ENCODE measurements at regions of chr17 and their contacts with region 1.

Region 1: GRCh38 chr17:4110152-4110551 is 32.7 kb downstream of the ZZEF1 start:
- DNase-seq: peak; percentile 38
- H3K4me3 ChIP-seq: no peak overlapping the region
- H3K27ac ChIP-seq: no peak overlapping the region
- H3K4me1 ChIP-seq: peaks cover 5% of the 10 kb centered on the region
- H3K27me3 ChIP-seq: no peaks in the 10 kb centered on the region
- CTCF ChIP-seq: no peak

Region 2: DNA sequence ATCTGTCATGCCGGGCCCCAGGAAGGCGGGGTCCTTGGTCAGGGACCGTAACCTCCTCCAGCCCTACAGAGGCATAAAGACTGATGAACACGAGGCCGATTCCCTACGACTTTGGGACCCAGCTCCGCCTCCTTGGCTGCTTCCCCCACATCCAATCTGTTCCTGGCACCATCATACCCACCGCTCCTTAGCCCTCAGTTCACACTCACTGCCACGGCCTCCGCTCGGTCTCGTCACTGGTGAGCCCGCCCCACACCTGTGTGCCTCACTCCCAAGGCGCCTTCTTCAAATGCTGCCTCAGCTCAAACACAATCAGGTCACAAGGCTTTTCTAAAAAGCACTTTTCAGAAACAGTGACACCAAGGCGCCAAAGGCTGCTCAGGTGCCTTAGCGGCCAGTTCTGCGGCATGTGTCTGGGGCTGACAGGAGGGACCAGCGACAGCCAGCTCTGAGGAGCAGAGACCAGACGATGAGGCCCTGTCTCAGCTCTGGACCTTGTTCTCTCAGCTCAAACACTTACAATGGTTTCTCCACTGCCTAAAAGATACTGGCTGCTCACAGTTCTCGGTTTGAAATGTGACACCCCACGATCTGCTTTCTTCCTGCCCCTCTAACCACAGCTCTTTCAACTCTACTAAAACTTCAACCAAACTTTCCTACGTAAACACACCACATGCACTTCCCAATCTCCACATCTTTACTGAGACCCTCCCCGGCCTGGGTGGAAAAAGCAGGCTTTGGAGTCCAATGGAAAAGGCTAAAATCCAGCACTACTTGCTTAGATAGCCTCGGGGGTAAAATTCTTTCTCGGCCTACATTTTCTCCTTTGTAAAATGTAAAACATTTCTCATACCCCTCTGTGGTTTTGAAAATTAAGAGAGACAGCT is 66.0 kb after region 1 on chr17:
- CTCF ChIA-PET with region 1: no interaction called
- dilution Hi-C with region 1: no loop called
- in situ Hi-C with region 1: no loop called
- intact Hi-C with region 1: no loop called
- DNase-seq: no peak
- H3K4me3 ChIP-seq: no peak overlapping the region
- H3K27ac ChIP-seq: no peak overlapping the region
- H3K4me1 ChIP-seq: no peaks in the 10 kb centered on the region
- H3K27me3 ChIP-seq: no peaks in the 10 kb centered on the region
- CTCF ChIP-seq: no peak

Region 3: DNA sequence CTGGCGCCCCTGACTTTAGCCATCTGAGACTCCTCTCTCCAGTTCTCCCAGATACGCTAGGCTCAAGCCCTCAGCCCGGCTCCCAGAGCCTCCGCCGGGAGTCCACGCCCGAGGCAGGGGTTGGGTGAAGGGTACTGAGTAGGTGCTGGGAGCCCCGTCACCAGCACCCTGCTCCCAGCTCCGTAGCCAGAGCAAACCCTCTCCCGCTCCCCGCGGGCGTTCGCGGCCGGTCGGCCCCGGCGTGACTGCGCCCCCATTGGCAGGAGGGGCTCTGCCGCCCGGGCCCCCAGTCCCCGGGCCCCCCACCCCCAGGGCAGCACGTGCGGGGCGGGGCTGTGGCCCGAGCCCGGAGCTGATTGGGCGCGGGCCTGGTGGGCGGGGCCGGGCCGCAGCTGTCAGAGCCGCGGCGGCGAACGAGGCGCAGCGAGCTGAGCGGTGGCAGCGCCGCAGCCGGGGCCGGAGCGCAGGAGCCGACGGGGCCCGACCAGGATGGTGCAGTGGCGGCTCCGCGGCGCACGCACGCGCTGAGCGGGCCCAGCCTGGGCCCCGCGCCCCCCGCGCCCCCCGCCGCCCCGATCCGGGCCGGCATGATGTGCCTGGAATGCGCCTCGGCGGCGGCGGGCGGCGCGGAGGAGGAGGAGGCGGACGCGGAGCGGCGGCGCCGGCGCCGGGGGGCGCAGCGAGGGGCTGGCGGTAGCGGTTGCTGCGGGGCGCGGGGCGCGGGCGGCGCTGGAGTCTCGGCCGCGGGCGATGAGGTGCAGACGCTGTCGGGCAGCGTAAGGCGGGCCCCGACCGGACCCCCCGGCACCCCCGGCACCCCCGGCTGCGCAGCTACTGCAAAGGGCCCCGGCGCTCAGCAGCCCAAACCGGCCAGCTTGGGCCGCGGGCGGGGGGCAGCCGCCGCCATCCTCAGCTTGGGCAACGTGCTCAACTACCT is 388.6 kb after region 1 on chr17 and contains the start of gene SPNS2:
- CTCF ChIA-PET with region 1: no interaction called
- dilution Hi-C with region 1: loop called (anchors 10 kb)
- in situ Hi-C with region 1: no loop called
- intact Hi-C with region 1: no loop called
- DNase-seq: peak; percentile 36
- H3K4me3 ChIP-seq: no peak within 1 kb of the TSS
- H3K27ac ChIP-seq: no peak within 1 kb of the TSS
- H3K4me1 ChIP-seq: peaks cover 15% of the 10 kb centered on the region
- H3K27me3 ChIP-seq: peaks cover 19% of the 10 kb centered on the region
- CTCF ChIP-seq: no peak
- total RNA-seq, gene SPNS2: 0.67 TPM in 1 of 2 donors, not detected in the other

Measured in mammary epithelial cell (primary cell).